GM10248 (cell line): ENCODE measurements at regions of chr4 and their contacts with region 1.

Region 1: DNA sequence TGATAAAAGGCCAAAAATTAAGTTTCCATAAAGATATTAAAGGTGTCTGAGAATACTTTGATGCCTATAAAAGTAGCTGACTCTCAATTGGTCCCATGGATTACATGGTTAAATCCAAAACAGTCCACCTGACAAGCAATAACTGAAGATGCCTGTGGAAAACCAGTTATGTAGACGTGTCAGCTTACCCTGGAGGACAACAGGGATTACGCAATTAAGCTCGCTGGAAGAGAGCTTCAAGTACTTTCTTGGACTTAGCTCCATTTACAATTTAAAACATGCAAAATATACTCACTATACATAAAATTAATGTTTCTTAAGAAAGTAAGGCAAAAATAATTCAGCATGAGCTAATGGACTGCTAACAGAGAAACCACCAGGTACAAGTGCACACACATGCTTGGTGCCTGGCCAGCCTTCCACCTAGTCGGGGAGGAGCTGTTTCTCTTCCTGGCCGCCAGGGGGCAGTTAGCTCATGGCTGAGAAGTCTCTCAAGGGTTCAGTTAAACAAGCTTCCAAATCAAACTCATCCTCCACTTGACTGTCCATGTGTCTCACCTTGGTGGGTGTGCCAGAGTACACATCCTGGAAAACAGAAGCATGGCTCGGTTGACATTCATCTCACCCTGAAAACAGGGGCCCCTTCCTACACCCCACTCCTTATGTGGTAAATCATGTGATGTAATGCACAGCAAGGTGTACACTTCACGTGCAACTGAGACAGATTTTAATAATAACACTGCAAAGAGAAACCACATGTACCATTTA is 9.2 kb upstream of the FAM53A start:
- DNase-seq: peak; percentile 77
- CTCF ChIP-seq: peak; percentile 87

Region 2: GRCh38 chr4:1703867-1704266 is 10.6 kb after region 1 on chr4:
- CTCF ChIA-PET with region 1: interaction called, 149 read pairs
- POLR2A ChIA-PET with region 1: interaction called, 3 read pairs
- DNase-seq: no peak
- CTCF ChIP-seq: no peak

Region 3: DNA sequence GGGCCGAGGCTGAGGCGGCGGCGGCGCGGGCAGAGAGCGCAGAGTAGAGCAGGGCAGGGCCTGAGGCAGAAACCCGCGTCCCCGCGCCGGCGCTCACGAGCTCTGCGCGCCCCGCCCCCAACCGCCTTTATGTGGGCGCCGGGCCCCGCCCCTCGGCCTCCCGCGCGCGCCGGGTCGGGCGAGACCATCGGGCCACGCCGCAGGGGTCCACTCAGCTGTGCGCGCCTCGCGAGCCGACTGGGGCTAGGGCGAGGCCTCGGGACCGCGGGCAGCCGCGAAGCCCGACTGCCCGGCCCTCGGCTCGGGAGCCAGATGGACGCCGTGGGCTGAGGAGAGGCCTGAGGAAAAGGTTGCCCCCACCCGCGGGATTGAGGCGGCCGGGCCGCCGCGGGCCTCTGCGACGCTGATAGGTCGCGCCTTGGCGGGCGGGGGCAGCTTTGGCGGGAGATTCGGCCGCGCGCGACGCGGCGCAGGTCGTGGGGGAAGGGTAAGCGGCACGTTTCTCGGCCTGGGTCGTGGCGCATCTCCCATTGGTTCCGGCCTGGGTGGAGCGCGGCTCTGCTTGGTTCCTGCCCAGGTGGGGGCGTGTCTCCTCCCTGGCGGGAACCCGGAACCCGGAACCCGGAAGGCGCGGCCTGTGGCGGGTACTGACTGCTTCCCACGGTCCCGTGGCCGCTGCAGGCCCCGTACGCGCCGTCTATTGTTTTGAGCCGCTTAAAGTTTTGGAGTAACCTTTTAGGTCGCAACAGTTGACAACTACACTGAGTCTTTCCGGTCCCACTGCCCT is 19.1 kb after region 1 on chr4 and contains the start of gene SLBP:
- CTCF ChIA-PET with region 1: interaction called, 374 read pairs
- POLR2A ChIA-PET with region 1: interaction called, 9 read pairs
- DNase-seq: peak; percentile 98
- CTCF ChIP-seq: no peak

Region 4: GRCh38 chr4:1721004-1721665 is 27.8 kb after region 1 on chr4 and contains the starts of genes TACC3 and TMEM129:
- CTCF ChIA-PET with region 1: interaction called, 374 read pairs
- POLR2A ChIA-PET with region 1: interaction called, 5 read pairs
- DNase-seq: peak; percentile 99
- CTCF ChIP-seq: no peak

Region 5: DNA sequence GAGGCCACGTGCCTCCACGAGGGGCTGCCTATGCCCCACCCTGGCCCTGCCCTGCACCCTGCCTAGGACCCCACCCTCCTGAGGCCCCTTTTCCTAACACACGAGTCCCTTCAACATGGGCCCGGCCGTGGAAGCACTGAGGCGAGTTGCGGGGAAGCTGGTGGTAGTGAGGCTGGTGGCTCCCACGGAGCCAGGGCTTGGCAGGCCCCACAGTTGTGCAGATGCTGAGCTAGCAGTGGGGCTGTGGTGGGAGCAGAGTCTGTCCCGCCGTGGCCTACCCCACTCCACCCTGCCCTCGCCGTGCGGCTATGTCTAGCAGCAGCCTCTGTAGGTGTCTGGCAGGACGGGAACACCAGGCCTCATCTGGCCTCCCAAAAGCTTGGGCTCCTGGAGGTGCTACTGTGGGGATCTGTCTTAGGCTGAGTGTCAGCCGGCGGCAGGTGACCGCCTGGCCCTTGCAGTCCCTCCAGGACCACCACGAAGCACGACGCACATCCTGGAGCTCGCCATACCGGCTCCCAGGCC is 46.8 kb after region 1 on chr4:
- CTCF ChIA-PET with region 1: interaction called, 13 read pairs
- POLR2A ChIA-PET with region 1: no interaction called
- DNase-seq: no peak
- CTCF ChIP-seq: no peak

Region 6: GRCh38 chr4:1809754-1810511 is 116.6 kb after region 1 on chr4:
- CTCF ChIA-PET with region 1: interaction called, 22 read pairs
- POLR2A ChIA-PET with region 1: no interaction called
- DNase-seq: peak; percentile 89
- CTCF ChIP-seq: peak; percentile 95